GM10248 (cell line): ENCODE measurements at regions of chr7 and their contacts with region 1.

Region 1: GRCh38 chr7:100556541-100556940 is 17.2 kb downstream of the SAP25 start:
- DNase-seq: no peak
- CTCF ChIP-seq: no peak

Region 2: DNA sequence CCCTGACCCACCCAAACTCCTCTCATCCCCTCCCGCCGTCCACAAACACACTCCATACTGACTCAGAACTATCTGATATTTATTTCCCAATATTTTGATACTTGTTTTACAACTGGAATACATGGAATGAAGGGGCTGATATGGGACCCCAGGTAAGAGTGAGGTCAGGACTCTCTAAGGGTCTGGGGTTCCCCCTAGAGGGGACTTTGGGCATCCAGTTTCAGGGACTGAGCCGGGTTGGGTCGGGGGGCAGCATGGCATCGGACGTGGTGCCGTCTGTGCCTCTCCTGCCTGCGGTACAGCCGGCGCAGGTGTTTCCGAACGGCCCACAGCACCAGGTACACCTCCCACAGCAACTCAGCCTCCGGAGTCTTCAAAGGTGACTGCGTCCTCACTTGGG is 100.0 kb before region 1 on chr7:
- CTCF ChIA-PET with region 1: interaction called, 23 read pairs
- POLR2A ChIA-PET with region 1: interaction called, 7 read pairs
- DNase-seq: no peak
- CTCF ChIP-seq: no peak

Region 3: DNA sequence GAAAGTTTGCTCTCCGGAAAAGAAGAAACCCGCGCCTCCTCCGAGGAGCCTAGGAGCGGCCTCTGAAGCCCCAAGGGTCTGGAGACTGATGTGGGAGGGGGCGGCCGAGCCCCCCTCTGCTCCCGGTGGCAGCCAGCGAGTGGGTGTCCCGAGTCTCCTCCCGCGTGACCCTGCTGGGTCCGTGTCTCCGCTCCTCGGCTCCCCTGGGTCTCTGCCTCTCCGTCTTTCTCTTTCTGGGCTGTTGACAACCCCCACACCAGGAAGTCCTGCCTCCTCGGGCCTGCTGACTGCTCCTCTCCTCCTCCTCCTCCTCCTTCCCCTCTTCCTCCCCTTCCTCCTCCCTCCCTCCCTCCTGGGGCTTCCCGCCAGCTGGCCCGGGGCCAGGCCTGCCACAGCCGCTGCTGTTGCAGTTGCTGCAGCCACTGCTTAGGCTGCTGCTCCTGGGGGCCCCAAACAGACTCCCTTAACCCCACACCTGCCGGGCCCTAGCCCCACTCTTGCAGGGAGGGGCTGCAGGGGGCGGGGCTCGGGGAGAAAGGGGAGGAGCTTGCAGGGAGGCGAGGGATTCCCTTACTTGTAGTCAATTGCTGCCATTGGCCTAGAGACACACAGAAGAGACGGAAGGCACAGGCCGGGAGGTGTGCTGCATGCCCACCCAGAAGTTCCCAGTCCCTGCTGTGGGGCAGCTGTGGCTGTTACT is 77.4 kb before region 1 on chr7 and contains the start of gene TSC22D4:
- CTCF ChIA-PET with region 1: interaction called, 49 read pairs
- POLR2A ChIA-PET with region 1: no interaction called
- DNase-seq: peak; percentile 91
- CTCF ChIP-seq: no peak

Region 4: GRCh38 chr7:100545360-100546128 is 11.0 kb before region 1 on chr7:
- CTCF ChIA-PET with region 1: interaction called, 288 read pairs
- POLR2A ChIA-PET with region 1: interaction called, 6 read pairs
- DNase-seq: peak; percentile 61
- CTCF ChIP-seq: no peak

Region 5: DNA sequence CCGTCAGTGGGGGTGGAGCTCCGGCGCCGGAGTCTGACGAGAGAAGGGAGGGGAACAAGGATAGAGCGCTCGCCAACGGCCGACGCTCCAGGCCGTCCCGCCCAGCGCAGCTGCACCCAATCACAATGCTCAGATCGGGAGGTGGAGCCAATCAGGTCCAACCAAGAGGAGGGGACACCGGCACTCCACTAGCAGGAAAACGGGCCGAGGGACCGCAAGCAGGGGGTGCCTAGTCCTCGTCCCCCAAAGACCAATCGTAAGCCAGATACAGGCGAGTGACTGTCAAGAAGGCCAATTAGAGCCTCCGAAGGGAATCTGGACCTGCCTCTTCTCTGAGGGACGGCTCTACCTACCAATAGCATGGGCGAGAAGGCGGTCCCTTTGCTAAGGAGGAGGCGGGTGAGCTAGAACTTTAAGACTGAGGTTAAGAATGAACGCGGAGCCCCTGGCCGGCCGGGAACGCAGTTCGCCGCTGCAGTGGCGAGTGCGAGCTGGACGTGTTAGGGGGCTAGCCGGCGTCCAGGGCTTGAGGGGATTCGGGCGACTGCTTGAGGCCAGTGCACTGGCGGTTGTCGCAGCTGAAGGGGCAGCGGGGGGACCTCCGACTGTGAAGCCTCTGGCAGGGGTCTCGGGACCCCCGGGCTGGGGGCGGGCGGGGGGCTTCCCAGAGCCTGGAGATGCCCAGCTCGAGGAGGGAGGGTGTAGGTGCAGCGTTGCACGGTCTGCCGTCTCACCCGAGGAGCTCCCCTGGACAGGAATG is 29.9 kb after region 1 on chr7 and contains the start of gene FBXO24:
- CTCF ChIA-PET with region 1: interaction called, 12 read pairs
- POLR2A ChIA-PET with region 1: interaction called, 8 read pairs
- DNase-seq: peak; percentile 100
- CTCF ChIP-seq: no peak